ENCODE measurements at regions of chr5 and their contacts with region 1.

Region 1: DNA sequence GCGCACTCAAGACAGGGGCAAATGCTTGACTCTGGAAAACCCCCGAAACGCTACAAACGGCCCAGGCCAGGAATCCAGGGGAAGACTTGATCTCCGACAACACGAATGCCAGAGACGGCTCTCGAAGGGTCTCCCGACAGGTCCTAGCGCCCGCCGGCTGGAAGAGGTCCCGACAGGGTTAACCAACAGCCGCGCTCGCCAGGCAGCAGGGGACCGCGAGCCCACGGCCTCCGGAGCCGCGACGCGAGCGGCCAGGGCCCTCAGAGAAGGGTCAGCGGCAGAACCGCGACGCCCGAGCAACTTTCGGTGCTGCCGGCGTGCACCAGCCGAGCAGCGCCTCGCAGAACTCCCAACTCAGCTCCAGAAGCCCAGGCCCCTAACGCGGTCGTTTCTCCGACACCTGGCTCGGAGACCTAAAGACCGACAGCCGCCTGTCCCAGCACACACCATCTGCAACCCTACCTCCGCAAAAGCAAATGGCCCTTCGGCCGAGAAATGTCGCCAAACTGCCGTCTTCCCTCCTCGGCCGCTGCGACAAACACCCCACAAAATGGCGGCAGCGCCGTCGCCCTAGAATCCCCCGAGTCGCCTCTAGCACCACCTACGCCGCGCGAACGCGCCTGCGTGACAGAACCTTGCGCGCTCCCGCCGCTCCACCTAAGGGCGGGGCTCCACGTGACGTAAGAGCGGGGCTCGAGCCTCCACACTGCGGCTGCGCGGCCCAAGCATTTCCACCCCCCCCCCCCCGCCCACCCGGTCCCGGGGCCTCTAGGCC is at the start of gene CLK4:
- DNase-seq: peak; percentile 97
- H3K4me3 Mint-ChIP-seq: peak within 1 kb of the TSS; percentile 88
- H3K27ac Mint-ChIP-seq: peak within 1 kb of the TSS; percentile 100
- H3K4me1 Mint-ChIP-seq: peaks cover 32% of the 10 kb centered on the region
- H3K27me3 Mint-ChIP-seq: no peaks in the 10 kb centered on the region
- CTCF ChIP-seq: no peak
- total RNA-seq, gene CLK4: 49.3 and 51.7 TPM in 2 replicates

Region 2: DNA sequence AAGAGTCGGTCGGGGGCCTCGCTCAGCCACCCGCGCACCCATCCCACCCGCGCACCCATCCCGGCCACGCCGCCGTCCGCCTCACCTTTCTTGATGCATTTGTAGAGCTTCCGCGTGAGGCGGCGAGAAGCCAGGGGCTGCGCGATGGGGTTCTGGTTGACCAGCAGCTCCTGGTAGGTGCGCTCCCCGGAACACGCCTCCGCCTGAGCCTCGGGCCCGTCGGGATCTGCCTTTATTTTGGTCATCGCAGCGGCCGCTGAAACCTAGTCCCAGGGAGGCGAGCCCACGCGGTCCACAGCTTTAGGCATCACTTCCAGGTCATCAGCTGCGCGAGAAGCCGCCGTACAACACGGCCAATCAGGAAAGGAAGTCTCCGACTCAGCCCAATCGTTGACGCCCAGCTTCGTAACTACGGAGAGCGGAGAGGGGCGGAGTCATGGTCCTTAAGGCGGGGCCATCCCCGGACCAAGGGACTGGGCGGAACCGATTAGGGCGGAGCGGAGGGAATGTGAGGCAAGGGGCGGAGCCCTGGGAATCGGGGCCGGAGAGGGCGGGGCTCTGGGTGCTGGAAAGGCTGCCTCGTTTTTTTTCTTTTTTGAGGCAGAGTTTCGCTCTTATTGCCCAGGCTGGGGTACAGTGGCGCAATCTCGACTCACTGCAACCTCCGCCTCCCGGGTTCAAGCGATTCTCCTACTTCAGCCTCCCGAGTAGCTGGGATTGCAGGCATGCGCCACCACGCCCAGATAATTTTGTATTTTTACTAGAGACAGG is 472.9 kb before region 1 on chr5 and contains the start of gene NHP2:
- CTCF ChIA-PET with region 1: no interaction called
- POLR2A ChIA-PET with region 1: no interaction called
- intact Hi-C with region 1: loop called (anchors 5 kb)
- DNase-seq: peak; percentile 100
- H3K4me3 Mint-ChIP-seq: peak within 1 kb of the TSS; percentile 98
- H3K27ac Mint-ChIP-seq: peak within 1 kb of the TSS; percentile 8
- H3K4me1 Mint-ChIP-seq: peaks cover 11% of the 10 kb centered on the region
- H3K27me3 Mint-ChIP-seq: no peaks in the 10 kb centered on the region
- CTCF ChIP-seq: no peak
- total RNA-seq, gene NHP2: 322 and 327 TPM in 2 replicates

Region 3: DNA sequence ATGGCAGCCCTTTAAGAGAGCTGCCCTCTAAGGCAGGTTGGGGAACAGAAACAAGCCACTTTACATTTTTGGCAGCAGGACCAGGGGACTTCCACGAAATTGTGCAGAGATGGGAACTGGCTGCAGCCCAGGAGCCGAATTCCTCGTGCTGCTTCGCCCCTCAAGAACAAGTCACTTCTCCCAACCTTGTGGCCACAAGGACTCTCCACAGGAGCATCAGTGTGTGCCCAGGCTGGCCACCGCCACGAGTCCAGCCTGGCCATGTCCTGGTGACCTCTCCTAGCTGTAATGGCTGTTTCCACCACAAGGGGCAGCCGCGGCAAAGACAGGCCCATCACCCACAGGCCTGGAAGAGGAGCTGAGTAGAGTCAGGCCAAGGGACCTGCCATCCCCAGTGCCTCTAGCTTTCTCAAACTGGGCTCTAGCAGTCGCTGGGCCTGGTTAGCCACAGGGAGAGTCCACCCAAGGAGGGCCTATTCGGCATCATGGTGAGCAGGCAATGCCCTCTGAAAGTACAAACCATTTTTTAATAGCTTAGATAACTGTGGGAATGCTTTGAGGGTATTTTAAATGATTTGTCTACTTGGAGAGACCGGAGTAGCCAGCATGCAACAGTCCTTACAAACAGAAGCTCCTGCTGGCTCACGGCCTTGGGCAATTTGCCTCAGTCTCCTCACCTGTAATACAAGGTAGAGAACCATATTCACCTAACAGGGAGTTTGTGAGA is 165.5 kb before region 1 on chr5:
- CTCF ChIA-PET with region 1: no interaction called
- POLR2A ChIA-PET with region 1: no interaction called
- intact Hi-C with region 1: no loop called
- DNase-seq: peak; percentile 77
- H3K4me3 Mint-ChIP-seq: no peak overlapping the region
- H3K27ac Mint-ChIP-seq: no peak overlapping the region
- H3K4me1 Mint-ChIP-seq: peaks cover 5% of the 10 kb centered on the region
- H3K27me3 Mint-ChIP-seq: no peaks in the 10 kb centered on the region
- CTCF ChIP-seq: peak; percentile 95

Region 4: GRCh38 chr5:178642351-178642971 is 15.8 kb after region 1 on chr5:
- CTCF ChIA-PET with region 1: interaction called, 8 read pairs
- POLR2A ChIA-PET with region 1: interaction called, 79 read pairs
- intact Hi-C with region 1: loop called (anchors 1 kb)
- DNase-seq: peak; percentile 100
- H3K4me3 Mint-ChIP-seq: peak overlapping the region; percentile 37
- H3K27ac Mint-ChIP-seq: peak overlapping the region; percentile 72
- H3K4me1 Mint-ChIP-seq: peaks cover 45% of the 10 kb centered on the region
- H3K27me3 Mint-ChIP-seq: no peaks in the 10 kb centered on the region
- CTCF ChIP-seq: no peak

Region 5: DNA sequence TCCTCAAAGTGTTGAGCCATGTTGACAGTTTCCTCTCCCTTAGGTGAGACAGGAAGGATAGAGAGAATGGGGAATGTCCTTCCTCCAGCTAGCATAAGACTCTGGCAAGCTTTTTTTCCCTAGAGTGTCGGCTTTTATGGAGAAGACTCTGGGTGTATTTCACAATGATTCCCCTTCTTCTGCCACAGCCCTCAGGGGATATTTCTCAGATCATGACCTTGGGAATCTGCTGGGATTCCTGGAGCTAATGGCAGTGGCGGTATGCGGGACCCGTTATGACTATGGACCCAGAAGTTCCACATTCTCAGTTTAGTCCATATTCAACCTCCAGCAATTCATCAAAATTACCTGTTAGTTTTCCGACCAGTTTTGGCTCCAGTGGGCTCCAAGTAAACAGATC is 79.9 kb after region 1 on chr5:
- CTCF ChIA-PET with region 1: interaction called, 6 read pairs
- POLR2A ChIA-PET with region 1: interaction called, 12 read pairs
- intact Hi-C with region 1: no loop called
- DNase-seq: no peak
- H3K4me3 Mint-ChIP-seq: no peak overlapping the region
- H3K27ac Mint-ChIP-seq: no peak overlapping the region
- H3K4me1 Mint-ChIP-seq: no peaks in the 10 kb centered on the region
- H3K27me3 Mint-ChIP-seq: no peaks in the 10 kb centered on the region
- CTCF ChIP-seq: no peak

Region 6: GRCh38 chr5:178831049-178831448 is 204.4 kb after region 1 on chr5:
- CTCF ChIA-PET with region 1: interaction called, 3 read pairs
- POLR2A ChIA-PET with region 1: interaction called, 14 read pairs
- intact Hi-C with region 1: loop called (anchors 5 kb)
- DNase-seq: no peak
- H3K4me3 Mint-ChIP-seq: no peak overlapping the region
- H3K27ac Mint-ChIP-seq: no peak overlapping the region
- H3K4me1 Mint-ChIP-seq: peaks cover 17% of the 10 kb centered on the region
- H3K27me3 Mint-ChIP-seq: no peaks in the 10 kb centered on the region
- CTCF ChIP-seq: no peak

Region 7: GRCh38 chr5:179051784-179052183 is 425.1 kb after region 1 on chr5:
- CTCF ChIA-PET with region 1: no interaction called
- POLR2A ChIA-PET with region 1: no interaction called
- intact Hi-C with region 1: no loop called
- DNase-seq: no peak
- H3K4me3 Mint-ChIP-seq: no peak overlapping the region
- H3K27ac Mint-ChIP-seq: no peak overlapping the region
- H3K4me1 Mint-ChIP-seq: no peaks in the 10 kb centered on the region
- H3K27me3 Mint-ChIP-seq: no peaks in the 10 kb centered on the region
- CTCF ChIP-seq: no peak

Region 8: DNA sequence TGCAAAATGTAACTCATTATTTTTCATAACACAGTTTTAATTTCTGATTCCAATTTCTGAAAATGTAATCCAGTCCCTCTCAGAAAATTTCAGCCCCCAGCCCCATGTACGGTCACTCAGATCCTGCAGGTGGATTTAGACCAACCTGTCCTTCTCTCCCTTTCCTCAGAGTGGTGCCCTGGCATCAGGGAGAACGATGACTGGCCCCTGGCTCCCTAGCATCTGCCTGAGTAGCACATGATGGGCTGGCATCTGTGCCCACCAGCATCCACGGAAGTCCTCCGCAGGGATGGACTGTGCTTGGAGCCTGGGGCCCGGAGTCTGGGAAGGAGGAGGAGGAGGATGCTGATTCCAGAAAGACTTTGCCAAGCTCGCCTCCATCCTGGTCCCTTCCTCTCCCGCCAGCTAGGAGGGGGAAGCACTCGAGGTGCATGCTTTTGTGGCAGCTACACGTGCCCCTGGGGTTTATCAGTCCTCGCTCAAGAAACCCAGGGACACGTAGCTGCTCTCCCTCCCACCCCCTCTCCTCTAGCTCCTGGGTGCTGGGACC is 869.3 kb after region 1 on chr5:
- CTCF ChIA-PET with region 1: no interaction called
- POLR2A ChIA-PET with region 1: no interaction called
- intact Hi-C with region 1: loop called (anchors 10 kb)
- DNase-seq: peak; percentile 39
- H3K4me3 Mint-ChIP-seq: no peak overlapping the region
- H3K27ac Mint-ChIP-seq: no peak overlapping the region
- H3K4me1 Mint-ChIP-seq: no peaks in the 10 kb centered on the region
- H3K27me3 Mint-ChIP-seq: no peaks in the 10 kb centered on the region
- CTCF ChIP-seq: peak; percentile 21

Measured in MCF 10A (cell line).